ENCODE measurements at regions of chr17 and their contacts with region 1.

Region 1: DNA sequence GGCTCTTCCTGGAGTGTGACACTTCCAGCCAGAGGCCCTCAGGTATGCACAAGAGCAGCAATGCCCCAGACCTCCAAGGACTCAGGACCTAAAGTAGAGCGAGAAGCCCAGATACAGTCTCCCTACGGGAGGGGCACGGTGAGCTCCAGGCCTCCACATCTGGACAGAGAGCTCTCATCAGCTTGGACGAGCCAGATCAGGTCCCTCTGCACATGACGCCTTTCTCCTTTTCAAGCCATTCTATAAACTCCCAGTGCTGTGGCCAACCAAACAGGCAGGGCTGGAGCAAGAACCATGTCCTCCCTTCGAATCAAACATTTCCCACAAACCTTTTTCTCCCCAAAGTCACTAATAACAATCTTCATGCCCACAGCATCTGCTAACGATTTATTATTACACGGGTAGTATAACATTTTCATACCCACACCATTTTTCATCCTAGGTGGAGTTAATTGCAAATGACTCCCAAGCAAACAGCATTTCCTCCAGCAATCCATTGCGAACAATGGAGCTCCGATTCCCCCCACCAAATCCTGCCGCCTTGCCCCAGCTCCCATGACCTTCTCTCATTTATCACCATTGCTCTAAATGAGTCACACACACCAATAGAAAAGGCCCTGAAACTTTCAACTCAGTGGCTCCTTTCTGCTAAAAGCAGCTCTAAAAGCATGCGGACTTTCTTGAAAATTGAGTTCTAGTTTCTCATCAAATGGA is 24.2 kb upstream of the NLRP1 start:
- DNase-seq: no peak
- ATAC-seq: no peak
- H3K4me3 Mint-ChIP-seq: no peak overlapping the region
- H3K27ac Mint-ChIP-seq: no peak overlapping the region
- H3K4me1 Mint-ChIP-seq: no peaks in the 10 kb centered on the region
- H3K27me3 Mint-ChIP-seq: peaks cover 6% of the 10 kb centered on the region

Region 2: GRCh38 chr17:5651348-5651747 is 42.8 kb after region 1 on chr17:
- CTCF ChIA-PET with region 1: no interaction called
- POLR2A ChIA-PET with region 1: interaction called, 10 read pairs
- intact Hi-C with region 1: no loop called
- DNase-seq: no peak
- ATAC-seq: no peak
- H3K4me3 Mint-ChIP-seq: no peak overlapping the region
- H3K27ac Mint-ChIP-seq: no peak overlapping the region
- H3K4me1 Mint-ChIP-seq: no peaks in the 10 kb centered on the region
- H3K27me3 Mint-ChIP-seq: peaks cover 27% of the 10 kb centered on the region

Measured in activated CD4-positive, alpha-beta T cell treated with anti-CD3 and anti-CD28 coated beads for 36 hours (primary cell).